GM10248 (cell line): ENCODE measurements at regions of chr14 and their contacts with region 1.

Region 1: DNA sequence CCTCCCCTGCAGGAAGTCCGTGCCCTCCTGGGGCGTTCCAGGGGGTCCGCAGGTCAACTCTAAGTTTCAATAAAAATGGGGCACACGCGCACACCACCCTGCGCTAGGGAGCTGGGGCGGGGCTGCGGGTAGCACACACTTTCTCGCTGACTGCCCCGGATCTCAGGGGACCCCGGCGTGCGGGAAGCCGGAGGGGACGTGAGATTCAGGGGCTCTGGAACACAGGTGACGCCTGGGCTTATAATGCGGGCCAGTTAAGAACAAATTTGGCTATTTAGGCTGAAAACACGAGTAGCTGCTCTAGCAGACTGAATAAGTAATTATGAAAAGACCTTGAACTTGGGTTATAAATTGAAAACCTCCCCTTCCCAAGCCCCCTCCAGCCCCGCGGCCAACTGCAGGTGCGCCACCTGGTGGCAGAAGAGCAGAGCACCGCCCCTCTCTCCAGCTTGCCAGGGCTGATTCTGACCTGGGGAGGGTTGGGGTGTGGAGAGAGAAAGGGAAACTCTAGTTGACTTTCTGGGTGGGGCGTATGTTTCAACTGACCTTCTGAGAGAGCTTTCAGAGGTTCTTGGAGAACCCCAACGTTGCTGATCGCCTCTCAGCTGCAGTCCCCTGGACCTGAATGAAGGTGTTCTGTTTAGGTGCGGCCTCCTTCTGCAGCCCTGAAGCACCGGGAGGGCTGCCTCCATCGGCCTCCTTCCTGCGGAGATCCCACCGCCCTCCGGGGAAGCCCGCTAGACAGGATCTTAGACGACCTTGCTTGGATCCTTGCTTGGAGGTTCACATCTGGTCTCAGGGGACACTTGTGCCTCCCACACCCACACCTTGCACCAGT is 118.4 kb upstream of the EVL start:
- DNase-seq: peak; percentile 77
- CTCF ChIP-seq: peak; percentile 91

Region 2: DNA sequence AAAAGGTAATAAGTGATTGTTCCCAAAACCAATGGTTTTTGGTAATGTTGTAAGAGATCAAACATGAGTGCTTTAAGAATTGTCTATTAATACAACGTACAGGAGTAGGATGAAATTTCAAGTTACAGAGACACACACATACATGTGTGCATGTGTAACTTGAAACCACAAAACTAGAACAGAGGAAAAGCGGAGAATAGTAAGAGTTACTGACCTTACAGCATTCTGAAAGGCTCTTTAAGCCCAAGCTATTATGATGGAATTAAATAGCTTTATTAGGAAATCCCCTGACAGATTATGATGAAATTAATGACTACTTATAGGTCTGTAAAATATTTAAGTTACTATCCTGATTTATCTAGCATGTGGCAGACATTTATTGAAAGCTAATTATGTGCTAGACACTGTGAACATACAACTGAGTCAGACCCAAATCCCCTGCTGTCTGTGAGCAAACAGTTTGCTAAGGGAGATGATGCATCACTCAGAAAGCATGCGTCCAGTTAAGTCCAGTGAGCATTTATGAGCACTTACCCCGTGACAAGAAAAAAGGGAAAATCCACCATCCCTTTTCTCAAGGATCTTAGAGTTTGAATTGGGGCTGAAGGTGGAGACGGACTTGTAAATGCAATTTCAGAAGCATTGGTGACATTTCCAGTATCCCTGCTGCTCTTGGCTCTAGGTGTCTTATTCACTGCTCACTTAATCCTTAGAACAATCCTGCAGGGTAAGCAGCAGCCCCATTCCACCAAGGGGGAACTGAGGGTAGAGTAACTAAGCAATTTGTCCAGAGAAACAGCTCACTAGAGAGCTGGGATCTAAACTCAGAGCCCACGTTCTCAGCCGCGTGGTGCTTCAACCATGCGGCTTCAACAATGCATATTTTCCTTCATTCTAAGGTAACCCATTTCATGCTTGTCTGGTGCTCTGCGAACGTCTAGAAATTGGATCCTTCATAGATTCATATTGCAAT is 36.2 kb before region 1 on chr14:
- CTCF ChIA-PET with region 1: interaction called, 13 read pairs
- POLR2A ChIA-PET with region 1: no interaction called
- DNase-seq: no peak
- CTCF ChIP-seq: no peak

Region 3: GRCh38 chr14:99930420-99931274 is 16.2 kb before region 1 on chr14:
- CTCF ChIA-PET with region 1: interaction called, 19 read pairs
- POLR2A ChIA-PET with region 1: no interaction called
- DNase-seq: peak; percentile 57
- CTCF ChIP-seq: no peak

Region 4: DNA sequence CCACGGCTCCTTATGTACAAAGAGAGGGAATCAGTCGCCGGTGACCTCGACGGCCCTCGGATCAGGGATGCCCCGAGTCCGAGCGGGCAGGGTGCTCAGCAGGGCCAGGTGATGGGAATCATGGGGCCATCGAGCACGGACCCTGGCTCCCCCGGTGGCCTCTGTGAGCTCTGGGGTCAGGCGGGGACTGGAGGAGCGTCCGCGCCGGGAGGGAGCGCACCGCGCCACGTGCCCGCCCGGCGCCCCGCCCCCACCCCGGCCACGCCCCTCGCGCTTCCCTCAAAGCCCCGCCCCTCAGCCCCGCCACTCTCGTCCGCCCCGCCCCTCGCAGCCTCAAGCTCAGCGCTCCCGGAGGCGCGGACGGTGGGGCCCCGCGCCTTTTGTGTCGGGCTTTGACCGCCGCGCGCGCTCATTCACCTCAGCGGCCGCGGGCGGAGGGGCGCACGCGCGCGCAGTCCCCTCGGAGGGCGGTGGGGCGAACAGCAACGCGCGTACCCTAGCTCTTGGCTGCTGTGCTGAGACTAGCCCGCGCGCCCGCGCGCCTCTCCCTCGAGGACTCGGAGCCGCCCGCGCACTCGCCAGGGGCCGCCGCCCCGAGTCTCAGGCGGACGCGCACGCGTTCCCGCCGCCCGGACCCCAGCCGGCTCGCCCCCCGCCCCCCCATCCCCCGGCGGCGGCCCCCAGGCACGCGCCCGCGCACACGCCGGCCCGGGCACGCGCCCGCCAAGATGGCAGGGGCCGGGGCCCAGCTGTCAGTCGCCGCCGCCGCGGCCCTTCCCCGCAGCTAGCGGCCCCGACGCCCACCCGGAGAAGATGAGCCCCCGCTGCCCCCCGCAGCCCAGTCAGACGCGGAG is 24.4 kb after region 1 on chr14:
- CTCF ChIA-PET with region 1: interaction called, 13 read pairs
- POLR2A ChIA-PET with region 1: no interaction called
- DNase-seq: peak; percentile 86
- CTCF ChIP-seq: no peak

Region 5: DNA sequence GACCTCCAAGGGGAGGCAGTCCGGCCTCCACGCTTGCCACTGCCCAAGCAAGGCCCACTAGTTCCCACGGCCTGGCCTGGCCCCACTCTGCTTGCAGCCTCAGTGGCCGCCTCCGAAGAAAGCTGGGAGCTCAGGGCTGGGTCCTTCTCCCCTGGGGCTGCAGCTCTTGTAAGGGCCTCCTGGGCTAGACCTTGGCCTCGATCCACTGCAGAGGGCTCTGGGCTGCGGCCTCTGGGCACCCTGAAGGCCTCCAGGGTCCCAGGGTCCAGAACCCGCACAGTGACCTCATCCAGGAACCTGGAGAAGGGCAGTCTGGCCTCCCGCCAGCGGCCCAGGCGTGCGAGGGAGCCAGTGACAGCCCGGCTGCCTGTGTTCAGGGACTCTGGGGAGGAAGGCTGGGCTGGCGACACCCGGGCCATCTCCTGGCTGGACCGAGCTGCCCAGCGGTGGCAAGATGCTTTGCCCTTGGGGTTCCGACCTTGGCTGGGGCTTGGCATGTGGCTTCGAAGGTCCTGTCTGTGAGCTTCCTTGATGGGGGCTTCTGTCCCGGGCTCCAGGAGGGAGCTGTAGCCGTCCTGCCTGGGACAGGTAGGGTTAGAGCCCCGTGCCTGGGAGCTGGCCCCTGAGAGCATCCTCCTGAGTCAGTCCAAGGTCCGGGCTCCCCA is 630.6 kb after region 1 on chr14:
- CTCF ChIA-PET with region 1: no interaction called
- POLR2A ChIA-PET with region 1: no interaction called
- DNase-seq: no peak
- CTCF ChIP-seq: no peak